ENCODE measurements at regions of chr3 and their contacts with region 1.

Region 1: GRCh38 chr3:12868039-12869034 is 27.0 kb upstream of the RPL32 start:
- DNase-seq: peak; percentile 66
- H3K4me3 Mint-ChIP-seq: peak overlapping the region; percentile 61
- H3K27ac Mint-ChIP-seq: no peak overlapping the region
- H3K4me1 Mint-ChIP-seq: peaks cover 19% of the 10 kb centered on the region
- H3K27me3 Mint-ChIP-seq: peaks cover 28% of the 10 kb centered on the region

Region 2: GRCh38 chr3:12891985-12892839 is 23.9 kb after region 1 on chr3:
- CTCF ChIA-PET with region 1: interaction called, 14 read pairs
- POLR2A ChIA-PET with region 1: interaction called, 3 read pairs
- DNase-seq: peak; percentile 38
- H3K4me3 Mint-ChIP-seq: no peak overlapping the region
- H3K27ac Mint-ChIP-seq: no peak overlapping the region
- H3K4me1 Mint-ChIP-seq: peaks cover 6% of the 10 kb centered on the region
- H3K27me3 Mint-ChIP-seq: peaks cover 40% of the 10 kb centered on the region